GM10248 (cell line): ENCODE measurements at regions of chr12 and their contacts with region 1.

Region 1: DNA sequence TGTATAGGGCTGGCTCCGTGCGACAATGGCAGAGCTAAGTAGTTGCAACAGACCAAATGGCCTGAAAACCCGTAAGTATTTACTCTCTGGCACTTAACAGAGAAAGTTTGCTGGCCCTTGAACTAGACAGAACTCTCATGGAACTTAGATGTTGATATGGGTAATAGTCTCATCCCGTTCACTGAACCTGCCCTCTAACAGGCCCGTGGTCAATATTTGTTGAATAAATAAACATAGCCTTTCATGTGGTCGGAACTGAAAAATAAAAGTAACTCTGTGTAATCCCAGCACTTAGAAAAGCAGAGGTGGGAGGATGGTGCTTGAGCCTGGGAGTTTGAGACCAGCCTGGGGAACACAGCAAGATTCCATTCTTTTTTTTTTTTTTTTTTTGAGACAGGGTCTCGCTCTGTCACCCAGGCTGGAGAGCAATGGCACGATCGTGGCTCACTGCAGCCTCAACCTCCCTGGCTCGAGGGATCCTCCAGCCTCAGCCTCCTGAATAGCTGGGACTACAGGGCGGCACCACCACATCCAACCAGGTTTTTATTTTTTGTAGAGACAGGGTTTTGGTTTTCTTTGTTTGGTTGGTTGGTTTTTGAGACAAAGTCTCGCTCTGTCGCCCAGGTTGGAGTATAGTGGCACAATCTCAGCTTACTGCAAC is 29.7 kb downstream of the KDM2B start:
- DNase-seq: no peak
- CTCF ChIP-seq: no peak

Region 2: GRCh38 chr12:121388421-121388981 is 162.6 kb before region 1 on chr12:
- CTCF ChIA-PET with region 1: no interaction called
- POLR2A ChIA-PET with region 1: no interaction called
- DNase-seq: no peak
- CTCF ChIP-seq: no peak

Region 3: GRCh38 chr12:121499929-121500793 is 50.9 kb before region 1 on chr12:
- CTCF ChIA-PET with region 1: interaction called, 12 read pairs
- POLR2A ChIA-PET with region 1: interaction called, 3 read pairs
- DNase-seq: peak; percentile 86
- CTCF ChIP-seq: peak; percentile 91

Region 4: GRCh38 chr12:121565076-121565475 is 14.0 kb after region 1 on chr12:
- CTCF ChIA-PET with region 1: interaction called, 12 read pairs
- POLR2A ChIA-PET with region 1: no interaction called
- DNase-seq: no peak
- CTCF ChIP-seq: no peak

Region 5: GRCh38 chr12:121637231-121637914 is 86.3 kb after region 1 on chr12:
- CTCF ChIA-PET with region 1: interaction called, 10 read pairs
- POLR2A ChIA-PET with region 1: no interaction called
- DNase-seq: peak; percentile 68
- CTCF ChIP-seq: no peak

Region 6: GRCh38 chr12:121678716-121679580 is 127.8 kb after region 1 on chr12:
- CTCF ChIA-PET with region 1: interaction called, 23 read pairs
- POLR2A ChIA-PET with region 1: no interaction called
- DNase-seq: no peak
- CTCF ChIP-seq: no peak